ENCODE measurements at regions of chr17 and their contacts with region 1.

Region 1: DNA sequence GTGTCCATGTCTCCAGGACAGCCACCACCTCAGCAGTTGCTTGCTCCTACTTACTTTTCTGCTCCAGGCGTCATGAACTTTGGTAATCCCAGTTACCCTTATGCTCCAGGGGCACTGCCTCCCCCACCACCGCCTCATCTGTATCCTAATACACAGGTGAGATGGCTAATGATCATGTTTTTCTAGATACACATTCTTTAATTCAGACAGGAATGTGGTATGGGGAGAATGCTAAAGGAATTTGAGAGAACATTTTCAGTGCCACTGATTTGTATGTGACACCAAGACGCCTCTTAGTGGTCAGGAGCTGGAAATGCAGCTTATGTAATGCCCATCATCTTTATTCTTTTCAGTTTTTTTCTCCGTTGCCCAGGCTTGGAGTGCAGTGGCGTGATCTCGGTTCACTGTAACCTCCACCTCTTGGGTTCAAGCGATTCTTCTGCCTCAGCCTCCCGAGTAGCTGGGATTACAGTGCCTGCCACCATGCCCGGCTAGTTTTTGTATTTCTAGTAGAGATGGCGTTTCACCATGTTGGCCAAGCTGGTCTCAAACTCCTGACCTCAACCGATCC is 8.9 kb upstream of the RAPGEFL1 start:
- DNase-seq: peak; percentile 46 to 61
- H3K4me3 ChIP-seq: no peak overlapping the region
- H3K4me1 ChIP-seq: no peaks in the 10 kb centered on the region
- H3K27me3 ChIP-seq: no peaks in the 10 kb centered on the region

Region 2: GRCh38 chr17:40038882-40039513 is 129.3 kb before region 1 on chr17:
- in situ Hi-C with region 1: loop called (anchors 10 kb)
- DNase-seq: peak in 1 of 2 experiments; percentile 51
- H3K4me3 ChIP-seq: no peak overlapping the region
- H3K4me1 ChIP-seq: no peaks in the 10 kb centered on the region
- H3K27me3 ChIP-seq: no peaks in the 10 kb centered on the region

Measured in HAP-1 (cell line).